ENCODE measurements at regions of chr12 and their contacts with region 1.

Region 1: DNA sequence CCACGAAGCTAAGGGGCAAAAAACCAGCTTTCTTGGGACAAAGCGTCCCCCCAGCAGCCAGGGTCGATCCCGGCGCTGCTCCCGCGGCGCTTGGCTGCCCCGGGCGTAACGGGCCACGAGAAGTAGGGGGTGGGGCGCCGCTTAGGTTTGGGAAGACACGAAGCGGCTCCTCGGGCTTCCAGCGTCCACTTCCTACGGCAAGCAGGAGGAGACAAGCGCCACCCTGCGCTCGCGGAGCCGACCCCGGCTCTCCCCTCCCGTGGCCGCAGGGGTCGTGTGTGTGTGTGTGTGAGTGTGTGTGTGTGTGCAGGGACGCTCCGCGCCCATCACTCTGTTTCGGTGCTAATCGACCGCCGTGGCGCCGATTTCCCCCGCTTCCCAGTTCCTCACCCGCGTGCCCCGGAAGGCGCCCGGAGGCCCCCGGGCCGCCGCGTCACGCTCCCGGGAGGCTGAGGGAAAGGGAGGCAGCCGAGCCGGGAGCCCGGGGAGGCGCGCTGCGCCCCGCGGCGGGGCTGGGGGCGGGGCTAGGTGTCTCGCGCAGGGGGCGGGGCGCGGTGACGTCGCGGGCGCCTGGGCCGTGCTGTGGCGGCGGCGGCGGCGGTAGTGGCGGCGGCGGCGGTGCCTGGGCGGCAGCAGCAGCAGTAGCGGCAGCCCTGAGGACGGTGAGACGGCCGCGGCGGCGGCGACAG is at the start of gene ERC1:
- DNase-seq: peak; percentile 92 to 94 (median 93)
- ATAC-seq: peak; percentile 79 to 98 (median 94)
- H3K4me3 ChIP-seq: peak within 1 kb of the TSS; percentile 72 to 97 (median 91)
- H3K27ac ChIP-seq: peak within 1 kb of the TSS; percentile 88 to 99 (median 97)
- H3K4me1 ChIP-seq: peaks cover 0 to 42% (median 30%) of the 10 kb centered on the region in 12 donors
- H3K27me3 ChIP-seq: no peaks in the 10 kb centered on the region
- CTCF ChIP-seq: peak in 2 of 12 donors; percentile 11 to 22
- POLR2A ChIP-seq: peak in 1 of 2 donors; percentile 62
- total RNA-seq, gene ERC1: 36.0 to 84.0 (median 52.8) TPM

Region 2: GRCh38 chr12:949453-950191 is 41.2 kb before region 1 on chr12 and contains the start of gene RAD52:
- intact Hi-C with region 1: loop called in 5 of 10 experiments (anchors 2 to 5 kb)
- DNase-seq: peak; percentile 98 to 99 (median 98)
- ATAC-seq: peak; percentile 97 to 98 (median 97)
- H3K4me3 ChIP-seq: peak within 1 kb of the TSS; percentile 68 to 94 (median 82)
- H3K27ac ChIP-seq: peak within 1 kb of the TSS; percentile 76 to 98 (median 92)
- H3K4me1 ChIP-seq: peaks cover 0 to 22% (median 12%) of the 10 kb centered on the region in 12 donors
- H3K27me3 ChIP-seq: no peaks in the 10 kb centered on the region
- CTCF ChIP-seq: peak; percentile 95 to 100 (median 99)
- POLR2A ChIP-seq: peak in 1 of 2 donors; percentile 48
- total RNA-seq, gene RAD52: 4.1 to 9.7 (median 6.2) TPM

Region 3: GRCh38 chr12:1054117-1054870 is 63.5 kb after region 1 on chr12:
- intact Hi-C with region 1: loop called in 2 of 10 experiments (anchors 5 to 10 kb)
- DNase-seq: peak in 1 of 5 donors; percentile 10
- ATAC-seq: peak; percentile 63 to 86 (median 80)
- H3K4me3 ChIP-seq: peak overlapping the region in 2 of 12 donors; percentile 8 to 9
- H3K27ac ChIP-seq: peak overlapping the region in 11 of 12 donors; percentile 15 to 71 (median 55)
- H3K4me1 ChIP-seq: peaks cover 0 to 21% (median 13%) of the 10 kb centered on the region in 12 donors
- H3K27me3 ChIP-seq: no peaks in the 10 kb centered on the region
- CTCF ChIP-seq: no peak
- POLR2A ChIP-seq: no peak

Region 4: DNA sequence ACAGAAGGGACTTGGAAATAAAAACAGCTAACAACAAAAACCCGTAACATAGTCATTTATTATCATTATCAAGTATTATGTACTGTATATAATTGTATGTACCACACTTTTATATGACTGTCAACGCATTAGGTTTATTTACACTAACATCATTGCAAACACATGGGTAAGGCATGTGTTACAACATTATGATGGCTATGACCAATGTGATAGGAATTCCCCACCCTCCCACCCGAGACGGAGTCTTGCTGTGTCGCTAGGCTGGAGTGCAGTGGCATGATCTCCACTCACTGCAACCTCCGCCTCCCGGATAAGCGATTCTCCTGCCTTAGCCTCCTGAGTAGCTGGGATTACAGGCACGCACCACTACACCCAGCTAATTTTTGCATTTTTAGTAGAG is 82.8 kb after region 1 on chr12:
- intact Hi-C with region 1: loop called in 1 of 10 experiments (anchors 10 kb)
- DNase-seq: no peak
- ATAC-seq: no peak
- H3K4me3 ChIP-seq: no peak overlapping the region
- H3K27ac ChIP-seq: no peak overlapping the region
- H3K4me1 ChIP-seq: peaks cover 0 to 28% (median 13%) of the 10 kb centered on the region in 12 donors
- H3K27me3 ChIP-seq: no peaks in the 10 kb centered on the region
- CTCF ChIP-seq: no peak
- POLR2A ChIP-seq: no peak

Region 5: GRCh38 chr12:1093166-1093751 is 102.5 kb after region 1 on chr12:
- intact Hi-C with region 1: loop called in 7 of 10 experiments (anchors 5 to 10 kb)
- DNase-seq: peak in 1 of 5 donors; percentile 16
- ATAC-seq: peak in 3 of 4 donors; percentile 63 to 69 (median 67)
- H3K4me3 ChIP-seq: no peak overlapping the region
- H3K27ac ChIP-seq: no peak overlapping the region
- H3K4me1 ChIP-seq: peaks cover 0 to 17% (median 4%) of the 10 kb centered on the region in 12 donors
- H3K27me3 ChIP-seq: no peaks in the 10 kb centered on the region
- CTCF ChIP-seq: peak; percentile 54 to 80 (median 74)
- POLR2A ChIP-seq: no peak

Region 6: GRCh38 chr12:1594261-1595025 is 603.6 kb after region 1 on chr12 and contains the start of gene FBXL14:
- intact Hi-C with region 1: loop called in 2 of 10 experiments (anchors 2 to 10 kb)
- DNase-seq: peak; percentile 93 to 95 (median 94)
- ATAC-seq: peak; percentile 74 to 83 (median 82)
- H3K4me3 ChIP-seq: peak within 1 kb of the TSS; percentile 58 to 99 (median 86)
- H3K27ac ChIP-seq: peak within 1 kb of the TSS; percentile 87 to 97 (median 93)
- H3K4me1 ChIP-seq: peaks cover 0 to 53% (median 39%) of the 10 kb centered on the region in 12 donors
- H3K27me3 ChIP-seq: no peaks in the 10 kb centered on the region
- CTCF ChIP-seq: peak in 1 of 12 donors; percentile 7
- POLR2A ChIP-seq: peak in 1 of 2 donors; percentile 40
- total RNA-seq, gene FBXL14: 4.7 to 10.1 (median 8.4) TPM

Measured in heart left ventricle (tissue), 16 donors.